HEK293T (cell line): ENCODE measurements at regions of chr22 and their contacts with region 1.

Region 1: DNA sequence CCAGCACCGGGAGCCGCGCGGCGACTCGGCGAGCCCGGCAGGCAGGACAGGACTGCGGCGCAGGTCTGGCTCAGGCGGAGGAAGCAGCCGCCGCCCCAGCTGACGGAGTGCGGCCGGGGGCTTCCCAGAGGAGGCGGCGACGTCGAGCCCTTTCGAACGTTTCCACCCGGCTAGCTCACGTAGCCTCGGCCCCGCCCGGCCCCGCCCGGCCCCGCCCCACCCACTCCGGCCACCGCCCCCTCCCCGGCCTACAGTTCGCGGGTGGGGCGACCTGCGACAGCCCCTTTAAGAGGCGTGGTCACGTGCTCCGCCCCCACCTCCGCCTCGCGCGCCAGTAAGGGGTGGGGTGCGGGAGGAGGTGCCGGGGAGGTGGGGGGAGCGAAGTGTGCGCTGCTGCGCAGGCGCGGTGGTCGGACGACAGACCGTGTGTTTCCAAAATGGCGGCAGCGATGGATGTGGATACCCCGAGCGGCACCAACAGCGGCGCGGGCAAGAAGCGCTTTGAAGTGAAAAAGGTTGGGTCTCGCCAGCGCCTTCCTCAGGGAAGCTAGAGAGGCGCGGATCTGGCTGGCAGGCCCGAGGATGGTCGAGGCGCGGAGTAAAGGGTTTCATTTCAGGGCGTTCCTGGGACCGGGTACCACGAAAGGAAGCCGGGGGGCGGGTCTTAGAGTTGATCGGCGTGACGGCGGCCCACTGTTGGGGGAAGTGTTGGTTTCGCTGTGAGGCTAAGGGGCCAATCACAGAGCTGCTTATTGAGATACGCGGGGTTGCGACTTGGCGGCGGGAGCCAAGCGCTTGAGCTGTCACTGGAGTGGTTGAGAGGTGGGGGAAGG is at the start of gene RBX1:
- DNase-seq: peak; percentile 99

Region 2: GRCh38 chr22:40641269-40641668 is 309.9 kb before region 1 on chr22:
- CTCF ChIA-PET with region 1: no interaction called
- POLR2A ChIA-PET with region 1: no interaction called
- DNase-seq: no peak

Region 3: DNA sequence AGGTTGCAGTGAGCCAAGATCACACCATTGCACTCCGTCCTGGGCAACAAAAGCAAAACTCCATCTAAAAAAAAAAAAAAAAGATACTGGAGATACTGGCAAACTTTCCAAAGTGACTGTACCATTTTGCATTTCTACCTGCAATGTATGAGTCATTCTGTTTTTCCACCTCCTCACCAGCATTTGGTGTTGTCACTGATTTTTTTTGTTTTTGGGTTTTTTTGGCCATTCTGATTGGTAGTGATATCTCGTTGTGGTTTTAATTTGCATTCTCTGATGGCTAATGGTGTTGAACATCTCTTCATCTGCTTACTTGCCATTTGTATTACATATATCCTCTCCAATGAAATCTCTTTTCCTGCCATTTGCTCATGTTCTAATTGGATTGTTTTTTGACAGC is 12.0 kb before region 1 on chr22:
- CTCF ChIA-PET with region 1: no interaction called
- POLR2A ChIA-PET with region 1: interaction called, 13 read pairs
- DNase-seq: no peak

Region 4: DNA sequence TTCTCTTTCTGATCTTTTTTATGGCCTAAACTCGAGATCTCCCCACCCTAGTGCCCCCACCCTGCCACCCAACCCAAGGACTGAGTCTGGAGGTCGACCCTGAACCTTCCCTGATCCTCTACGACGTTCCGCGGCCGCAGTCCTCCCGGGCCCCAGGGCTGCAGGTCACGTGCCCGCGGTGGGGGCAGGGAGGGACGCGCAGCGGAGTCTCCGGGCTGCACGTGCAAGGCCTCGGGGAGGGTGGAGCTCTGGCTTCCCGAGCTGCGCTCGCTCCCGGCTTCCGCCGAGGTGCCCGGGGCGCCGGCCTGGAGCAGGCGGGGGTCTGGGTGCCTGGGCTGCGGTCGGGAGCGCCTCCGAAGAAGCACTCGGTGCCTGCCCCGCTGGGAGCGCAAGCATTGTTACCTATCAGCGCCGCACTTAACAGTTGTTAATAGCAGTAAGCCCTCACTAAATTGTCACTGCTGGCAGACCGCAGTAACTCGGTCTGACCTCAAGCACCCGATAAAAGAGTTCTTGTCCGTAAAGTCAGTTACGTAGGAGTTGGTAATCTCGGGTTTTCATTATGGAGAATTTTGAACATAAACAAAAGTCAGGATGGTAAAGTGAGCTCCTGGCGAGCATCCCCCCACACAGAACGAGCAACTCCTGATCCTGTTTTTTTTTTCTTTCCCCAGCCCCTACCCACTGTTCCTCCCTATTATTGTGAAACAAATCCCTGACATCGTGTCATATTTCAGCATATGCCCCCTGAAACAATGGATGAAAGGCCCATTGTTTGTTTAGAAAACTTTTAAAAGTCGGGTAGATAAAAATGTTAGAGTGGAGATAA is 71.5 kb after region 1 on chr22:
- CTCF ChIA-PET with region 1: no interaction called
- POLR2A ChIA-PET with region 1: interaction called, 31 read pairs
- DNase-seq: peak; percentile 89

Region 5: DNA sequence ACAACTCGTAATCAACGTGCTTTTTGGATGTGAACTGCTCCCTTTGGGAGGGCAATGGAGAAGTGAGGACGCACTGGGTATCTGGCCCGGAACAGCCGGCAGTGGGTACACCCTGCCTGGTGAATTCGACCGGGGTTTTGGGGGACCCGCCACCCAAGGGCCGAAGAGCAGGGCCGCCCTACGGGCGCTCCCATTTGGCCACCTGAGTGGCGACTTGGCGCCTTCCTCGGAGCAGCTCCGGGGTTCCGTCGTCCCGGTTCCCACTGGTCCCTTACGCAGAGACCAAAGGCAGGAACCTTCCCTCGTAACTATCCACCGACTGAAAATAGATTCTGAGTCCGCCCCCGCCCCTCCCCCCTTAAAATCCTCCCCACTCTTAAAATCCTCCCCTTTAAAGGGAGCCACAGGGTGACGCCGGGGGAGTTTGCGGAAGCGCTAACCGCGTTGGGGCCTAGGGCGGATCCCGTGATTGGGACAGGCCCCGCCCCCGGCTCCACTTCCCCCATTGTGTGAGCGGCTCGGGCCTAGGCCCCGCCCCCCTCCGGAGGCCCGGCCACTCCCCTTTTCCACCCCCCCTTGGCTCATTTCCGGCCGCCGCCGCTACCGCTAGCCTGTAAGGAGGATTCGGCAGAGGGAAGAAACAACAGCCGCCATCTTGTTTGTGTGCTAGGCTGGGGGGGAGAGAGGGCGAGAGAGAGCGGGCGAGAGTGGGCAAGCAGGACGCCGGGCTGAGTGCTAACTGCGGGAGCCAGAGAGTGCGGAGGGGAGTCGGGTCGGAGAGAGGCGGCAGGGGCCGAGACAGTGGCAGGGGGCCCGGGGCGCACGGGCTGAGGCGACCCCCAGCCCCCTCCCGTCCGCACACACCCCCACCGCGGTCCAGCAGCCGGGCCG is 140.2 kb after region 1 on chr22:
- CTCF ChIA-PET with region 1: no interaction called
- POLR2A ChIA-PET with region 1: interaction called, 55 read pairs
- DNase-seq: peak; percentile 98